OCI-LY7 (cell line): ENCODE measurements at regions of chr3 and their contacts with region 1.

Region 1: DNA sequence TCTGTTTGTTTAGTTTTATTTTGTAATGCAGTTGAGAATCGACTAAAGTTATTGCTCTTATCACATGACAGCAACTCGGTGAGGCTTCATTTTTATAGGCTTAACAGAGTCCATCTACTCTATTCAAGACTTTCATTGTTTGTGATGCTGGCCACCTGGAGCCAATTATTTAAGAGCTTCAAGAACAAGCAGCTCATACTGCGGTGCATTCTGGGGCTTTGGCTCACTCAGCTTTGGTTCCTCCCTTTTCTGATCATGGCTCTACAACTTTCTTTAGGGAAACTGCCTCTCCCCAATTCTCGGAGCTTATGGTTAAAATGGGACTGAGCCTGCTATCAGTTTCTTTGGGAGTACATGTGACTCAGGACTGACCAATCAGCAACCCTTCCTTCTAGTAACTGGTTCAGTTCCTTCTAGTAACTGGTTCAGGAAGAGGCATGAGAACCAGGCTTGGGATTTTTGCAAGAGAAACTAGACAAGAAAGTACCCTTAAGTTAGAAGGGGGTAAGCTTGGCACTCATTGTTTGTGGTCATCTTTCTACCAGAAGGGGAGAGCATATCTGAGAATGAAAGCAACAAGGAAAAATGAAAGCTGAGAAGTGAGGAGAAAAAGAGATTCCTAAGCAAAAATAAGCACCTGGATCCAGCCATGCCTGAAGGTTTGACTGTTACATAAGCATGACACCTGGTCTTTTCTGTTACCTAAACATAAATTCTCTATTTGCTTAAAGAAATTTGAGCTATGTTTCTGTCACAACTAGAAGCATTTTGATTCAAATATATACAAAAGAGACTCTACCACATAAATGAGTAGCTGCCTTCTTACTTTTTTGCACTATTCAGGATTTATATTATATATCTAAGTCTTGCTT is 24.1 kb upstream of the ARHGEF3 start:
- DNase-seq: peak; percentile 54
- H3K4me3 ChIP-seq: peak overlapping the region; percentile 24
- H3K27ac ChIP-seq: peak overlapping the region; percentile 14
- H3K4me1 ChIP-seq: peaks cover 42% of the 10 kb centered on the region
- CTCF ChIP-seq: no peak

Region 2: GRCh38 chr3:56812754-56813650 is 12.8 kb before region 1 on chr3:
- CTCF ChIA-PET with region 1: interaction called, 3 read pairs
- POLR2A ChIA-PET with region 1: interaction called, 14 read pairs
- intact Hi-C with region 1: no loop called
- DNase-seq: no peak
- H3K4me3 ChIP-seq: no peak overlapping the region
- H3K27ac ChIP-seq: no peak overlapping the region
- H3K4me1 ChIP-seq: peaks cover 30% of the 10 kb centered on the region
- CTCF ChIP-seq: no peak

Region 3: DNA sequence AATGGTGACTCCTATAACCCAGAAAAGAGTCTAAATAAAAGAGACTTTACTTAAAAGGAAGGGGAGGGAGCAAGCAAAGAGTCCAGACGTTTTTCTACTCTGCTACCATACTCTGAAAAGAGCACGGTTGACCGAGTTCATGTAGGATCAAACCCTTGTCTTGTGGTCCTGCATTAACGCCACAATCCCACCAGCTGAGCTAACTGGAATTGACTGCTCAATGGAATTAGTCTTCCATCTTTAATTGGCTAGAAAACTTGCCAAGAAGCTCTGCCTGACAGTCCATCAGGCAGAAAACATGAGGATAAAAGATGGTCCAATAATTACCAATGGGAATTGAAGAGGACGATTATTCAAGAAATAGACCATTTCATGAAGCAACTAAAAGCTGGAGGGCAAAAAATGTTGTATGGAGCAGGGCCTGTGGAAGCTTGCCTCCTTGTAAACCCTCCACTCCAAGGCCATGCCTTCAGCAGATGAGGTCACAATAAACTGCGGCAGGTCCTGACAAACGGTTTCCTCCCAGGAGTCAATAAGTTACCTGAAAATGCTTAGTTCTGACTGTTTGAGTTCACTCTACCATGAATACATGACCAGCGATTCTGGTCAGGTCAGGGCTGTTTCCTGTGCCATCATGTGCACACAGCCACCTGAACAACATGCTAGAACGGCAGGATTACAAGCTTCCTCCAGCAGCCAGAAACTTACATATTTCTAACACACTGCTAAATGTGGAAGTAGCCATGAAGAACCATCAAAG is 11.6 kb after region 1 on chr3:
- CTCF ChIA-PET with region 1: interaction called, 4 read pairs
- POLR2A ChIA-PET with region 1: interaction called, 12 read pairs
- intact Hi-C with region 1: no loop called
- DNase-seq: peak; percentile 78
- H3K4me3 ChIP-seq: no peak overlapping the region
- H3K27ac ChIP-seq: peak overlapping the region; percentile 52
- H3K4me1 ChIP-seq: peaks cover 29% of the 10 kb centered on the region
- CTCF ChIP-seq: no peak

Region 4: DNA sequence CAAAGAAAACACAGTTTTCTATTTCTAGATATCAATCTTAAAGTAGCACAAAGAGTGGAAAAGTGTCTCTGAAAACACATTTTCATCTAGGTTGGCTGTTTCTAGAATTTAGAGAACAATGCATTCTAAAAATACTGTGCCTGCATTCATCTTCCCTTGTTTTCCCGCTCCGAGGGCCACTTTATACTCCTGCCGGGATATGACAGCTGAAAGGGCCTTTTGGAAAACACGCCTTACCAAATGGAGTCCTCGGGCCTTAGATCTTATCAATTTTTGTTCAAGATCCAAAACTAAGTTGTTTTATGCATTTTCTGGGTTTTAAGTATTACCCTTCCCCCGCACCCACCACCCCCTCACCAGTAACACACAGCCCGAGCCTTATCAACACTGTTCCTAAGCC is 23.9 kb after region 1 on chr3:
- CTCF ChIA-PET with region 1: no interaction called
- POLR2A ChIA-PET with region 1: interaction called, 21 read pairs
- intact Hi-C with region 1: no loop called
- DNase-seq: no peak
- H3K4me3 ChIP-seq: no peak overlapping the region
- H3K27ac ChIP-seq: no peak overlapping the region
- H3K4me1 ChIP-seq: peaks cover 19% of the 10 kb centered on the region
- CTCF ChIP-seq: no peak

Region 5: GRCh38 chr3:57026918-57027317 is 201.1 kb after region 1 on chr3:
- CTCF ChIA-PET with region 1: no interaction called
- POLR2A ChIA-PET with region 1: no interaction called
- intact Hi-C with region 1: no loop called
- DNase-seq: no peak
- H3K4me3 ChIP-seq: no peak overlapping the region
- H3K27ac ChIP-seq: no peak overlapping the region
- H3K4me1 ChIP-seq: peaks cover 46% of the 10 kb centered on the region
- CTCF ChIP-seq: no peak